Cardiac septum (tissue), 1 donor: ENCODE measurements at regions of chr4 and their contacts with region 1.

Region 1: DNA sequence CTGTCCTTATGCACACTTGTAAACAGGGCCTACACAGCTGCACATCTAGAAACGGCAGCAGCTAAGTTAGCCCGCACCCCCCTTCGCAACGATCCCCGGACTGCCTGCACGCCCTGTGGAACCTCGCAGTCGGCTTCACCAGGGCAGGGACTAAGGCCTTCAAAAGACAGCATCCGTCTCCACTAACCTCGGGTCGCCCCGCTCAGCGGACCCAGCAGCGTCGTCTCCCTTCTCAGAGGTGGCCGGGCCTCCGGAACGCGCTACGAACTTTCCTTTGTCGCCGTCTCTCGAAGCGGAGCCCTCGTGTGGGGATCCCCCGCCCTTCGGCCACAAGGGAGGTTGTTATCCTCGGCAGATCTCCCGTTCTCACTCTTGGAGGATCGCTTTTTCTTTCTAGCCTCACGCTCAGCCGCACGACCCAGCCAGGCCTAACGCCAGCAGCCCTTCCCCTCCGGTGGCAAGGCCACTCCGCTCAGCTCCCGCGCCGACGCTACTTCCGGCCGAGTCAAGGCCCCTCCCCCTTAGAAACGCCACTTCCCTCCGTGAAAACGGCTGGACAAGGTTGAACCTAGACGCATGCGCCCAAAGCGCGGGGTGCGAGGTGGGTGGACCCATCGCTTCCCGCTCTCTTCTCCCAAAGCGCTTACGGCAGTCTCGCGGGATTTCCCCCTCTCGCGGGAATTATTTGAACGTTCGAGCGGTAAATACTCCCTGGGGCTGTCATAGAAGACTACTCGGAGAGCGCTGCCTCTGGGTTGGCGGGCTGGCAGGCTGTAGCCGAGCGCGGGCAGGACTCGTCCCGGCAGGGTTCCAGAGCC is at the starts of genes DCAF16 and NCAPG:
- DNase-seq: peak; percentile 100
- total RNA-seq, gene DCAF16: 17.9 TPM
- total RNA-seq, gene NCAPG: 0.24 TPM

Region 2: DNA sequence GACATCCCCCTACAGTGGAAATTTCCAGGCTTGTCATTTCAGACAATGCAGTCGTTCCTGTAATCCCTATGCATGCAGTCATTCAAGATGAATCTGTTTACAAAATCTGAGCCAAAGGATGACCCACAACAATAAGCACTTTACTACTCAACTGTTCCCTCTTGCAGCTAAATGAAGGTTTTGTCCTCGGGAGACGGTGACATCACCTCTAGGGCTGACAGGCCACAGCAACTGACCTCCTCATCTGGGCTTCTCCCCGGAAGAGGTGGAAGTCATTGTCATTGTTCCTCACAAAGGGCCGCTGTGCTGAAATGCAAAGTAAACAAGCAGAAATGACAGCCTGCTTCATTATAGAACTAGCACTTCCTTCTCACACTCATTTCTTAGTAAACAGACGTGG is 266.3 kb before region 1 on chr4:
- intact Hi-C with region 1: loop called (anchors 5 kb)
- DNase-seq: no peak

Region 3: DNA sequence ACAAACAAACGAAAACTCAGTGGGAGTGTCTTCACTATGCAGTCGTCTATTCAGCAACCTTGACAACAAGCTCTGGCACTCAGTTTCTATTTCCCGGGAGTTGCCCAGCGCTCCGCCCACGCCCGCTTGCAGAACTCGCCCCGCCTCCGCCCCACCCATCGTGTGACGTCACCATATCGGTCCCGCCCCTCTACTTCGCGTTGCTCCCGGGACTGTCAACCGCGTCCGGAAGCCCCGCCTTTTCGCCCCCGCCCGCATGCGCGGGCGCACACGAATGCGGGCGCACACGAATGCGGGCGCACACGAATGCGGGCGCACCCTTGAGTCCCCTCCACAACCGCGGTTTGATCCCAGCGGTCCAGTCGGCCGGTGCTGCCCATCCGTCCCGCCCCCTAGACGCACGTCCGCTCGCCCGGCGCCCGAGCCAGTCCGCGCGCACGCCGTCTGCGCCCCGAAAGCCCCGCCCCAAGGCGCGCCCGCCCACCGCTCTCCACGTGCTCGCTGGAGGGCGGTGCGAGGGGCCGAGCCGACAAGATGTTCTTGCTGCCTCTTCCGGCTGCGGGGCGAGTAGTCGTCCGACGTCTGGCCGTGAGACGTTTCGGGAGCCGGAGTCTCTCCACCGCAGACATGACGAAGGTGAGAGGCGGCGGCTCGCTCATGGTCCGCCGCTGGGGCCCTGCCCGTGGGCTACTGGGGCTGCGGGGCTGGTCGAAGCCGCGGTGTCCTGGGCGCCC is 233.4 kb before region 1 on chr4 and contains the start of gene LAP3:
- intact Hi-C with region 1: loop called (anchors 1 kb)
- DNase-seq: peak; percentile 100
- total RNA-seq, gene LAP3: 58.9 TPM

Region 4: GRCh38 chr4:17614416-17615299 is 195.8 kb before region 1 on chr4 and contains the start of gene MED28:
- intact Hi-C with region 1: loop called (anchors 10 kb)
- DNase-seq: peak; percentile 97
- total RNA-seq, gene MED28: 21.7 TPM

Region 5: DNA sequence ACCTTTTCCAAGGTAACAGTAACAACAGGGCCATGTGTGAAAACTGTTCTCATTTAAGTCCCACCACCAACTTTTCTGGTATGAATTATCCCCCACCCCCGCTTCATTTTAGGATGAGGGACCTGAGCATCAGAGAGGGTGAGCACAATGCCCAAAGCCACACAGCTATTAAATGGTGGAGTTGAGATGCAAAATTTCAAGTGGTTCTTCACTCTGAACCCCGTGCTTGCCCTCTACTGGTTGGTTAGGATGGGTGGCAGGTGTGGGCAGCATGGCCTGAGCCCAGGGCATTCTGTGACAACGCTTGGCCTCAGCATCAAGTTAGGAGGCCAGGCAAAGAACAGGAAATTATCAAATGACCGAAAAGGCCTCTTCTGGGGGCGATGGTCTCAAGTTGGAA is 162.5 kb before region 1 on chr4:
- intact Hi-C with region 1: no loop called
- DNase-seq: no peak

Region 6: DNA sequence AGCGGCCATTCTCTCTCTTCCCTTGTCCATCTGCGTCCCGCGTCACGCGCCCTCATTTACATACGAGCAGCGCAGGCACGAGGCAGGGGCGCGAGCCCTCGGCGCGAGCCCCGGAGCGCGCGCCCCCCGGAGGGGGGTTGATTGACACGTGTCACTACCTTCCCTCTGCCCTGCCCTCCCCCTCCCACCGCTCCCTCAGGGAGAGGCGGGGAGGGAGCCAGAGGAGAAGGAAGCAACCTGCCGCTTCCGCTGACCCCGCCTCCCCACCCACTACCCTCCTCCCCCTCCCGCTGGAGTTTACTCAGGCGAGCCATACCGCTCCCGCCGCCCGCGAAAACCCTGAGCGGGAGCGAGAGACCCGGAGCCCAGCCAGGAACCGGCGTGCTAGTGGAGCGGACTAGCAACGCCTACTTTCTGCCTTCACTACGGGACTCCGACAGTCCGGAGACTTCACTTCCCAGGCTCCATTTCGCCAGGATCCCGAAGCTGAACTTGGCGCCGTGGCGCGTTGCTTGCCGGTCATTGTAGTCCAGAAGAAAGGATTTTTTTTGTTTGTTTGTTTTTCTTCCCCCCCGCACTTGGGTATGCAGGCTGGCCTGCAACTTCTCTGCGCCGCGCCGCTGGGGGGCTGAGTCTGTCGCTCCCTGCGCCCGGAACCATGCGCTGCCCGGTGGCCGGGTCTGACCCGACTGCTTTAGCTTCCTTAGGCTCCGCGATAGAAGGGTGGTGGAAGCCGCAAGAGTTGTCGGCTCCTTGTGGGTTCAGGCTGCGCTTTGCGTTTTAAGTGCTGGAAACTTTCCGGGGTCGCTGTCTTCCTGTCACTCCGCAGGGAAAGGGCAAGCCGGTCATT is 211.5 kb after region 1 on chr4 and contains the start of gene LCORL:
- intact Hi-C with region 1: loop called (anchors 1 kb)
- DNase-seq: peak; percentile 95
- total RNA-seq, gene LCORL: 5.5 TPM